ENCODE measurements at regions of chr6 and their contacts with region 1.

Region 1: DNA sequence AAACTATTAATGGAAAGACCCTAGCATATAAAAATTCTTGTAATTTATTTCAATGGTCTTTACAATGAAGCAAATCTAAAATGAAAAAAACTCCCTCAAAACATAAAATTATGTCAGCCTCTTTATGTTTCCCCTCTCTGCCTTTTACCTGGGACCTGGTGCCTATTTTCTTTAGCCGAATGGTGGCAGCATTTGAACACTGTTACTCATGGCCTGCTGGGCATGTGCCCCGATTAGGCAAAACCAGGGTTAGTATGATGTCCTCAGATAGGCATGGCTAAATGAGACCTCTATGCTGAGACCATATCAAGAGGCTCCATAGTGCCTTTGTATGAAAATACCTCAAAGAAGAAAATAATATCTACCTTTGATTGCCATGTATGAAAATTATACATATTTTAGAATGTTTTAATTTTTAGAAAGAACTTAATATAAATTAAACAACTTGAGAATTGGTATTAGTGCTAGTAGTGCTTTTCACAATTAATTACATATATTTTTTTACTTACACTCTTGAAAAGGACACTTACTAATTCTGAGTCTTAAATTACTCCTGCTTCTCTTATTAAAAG is 22.5 kb upstream of the C6orf58 start:
- DNase-seq: peak; percentile 43
- ATAC-seq: peak; percentile 37
- H3K4me3 Mint-ChIP-seq: no peak overlapping the region
- H3K27ac Mint-ChIP-seq: no peak overlapping the region
- H3K4me1 Mint-ChIP-seq: no peaks in the 10 kb centered on the region
- H3K27me3 Mint-ChIP-seq: peaks cover 16% of the 10 kb centered on the region
- CTCF ChIP-seq: no peak

Region 2: GRCh38 chr6:127641905-127642304 is 87.4 kb after region 1 on chr6:
- CTCF ChIA-PET with region 1: no interaction called
- POLR2A ChIA-PET with region 1: no interaction called
- intact Hi-C with region 1: loop called (anchors 10 kb)
- DNase-seq: peak; percentile 6
- ATAC-seq: peak; percentile 49
- H3K4me3 Mint-ChIP-seq: no peak overlapping the region
- H3K27ac Mint-ChIP-seq: no peak overlapping the region
- H3K4me1 Mint-ChIP-seq: no peaks in the 10 kb centered on the region
- H3K27me3 Mint-ChIP-seq: peaks cover 2% of the 10 kb centered on the region
- CTCF ChIP-seq: peak; percentile 44